Endothelial cell of umbilical vein (primary cell): ENCODE measurements at regions of chr5 and their contacts with region 1.

Region 1: DNA sequence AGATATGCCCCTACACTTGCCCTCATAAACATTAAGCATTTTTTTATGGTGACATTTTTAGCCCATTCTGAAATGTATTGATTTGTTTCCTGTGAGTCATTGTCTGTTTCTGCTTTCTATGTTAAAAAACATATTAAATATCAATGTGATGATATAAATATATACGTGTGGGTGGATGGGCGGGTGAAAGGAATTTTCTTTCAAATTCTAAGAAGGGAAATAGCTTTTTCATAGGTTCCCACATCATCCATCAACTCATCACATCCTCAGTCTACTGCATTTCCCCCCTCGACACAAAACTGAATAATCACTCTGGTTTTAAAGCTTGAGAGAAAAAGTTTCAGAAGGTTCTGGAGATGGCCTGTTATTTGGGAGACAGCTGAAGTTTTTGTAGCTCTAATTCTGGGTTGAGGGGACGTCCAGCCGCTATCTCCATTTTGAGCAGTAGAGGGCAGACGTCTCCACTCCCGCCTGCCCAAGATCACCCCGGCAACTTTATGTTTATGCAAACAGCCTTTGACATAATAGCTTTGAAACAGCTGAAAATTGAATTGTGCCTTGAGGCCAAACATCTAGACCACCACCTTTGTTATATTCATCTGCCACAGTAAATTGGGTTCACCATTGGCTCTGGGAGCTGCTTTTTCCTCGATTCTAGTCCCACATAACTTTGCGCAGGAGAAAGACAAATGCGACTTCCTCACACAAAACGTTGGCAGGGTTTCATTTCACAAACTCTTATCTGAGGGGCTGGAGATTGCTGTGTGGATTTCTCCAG is 216.2 kb upstream of the CLINT1 start:
- DNase-seq: peak; percentile 92
- H3K4me3 ChIP-seq: peak overlapping the region in 2 of 3 experiments; percentile 8 to 50
- H3K27ac ChIP-seq: peak overlapping the region; percentile 97
- H3K4me1 ChIP-seq: peaks cover 18% of the 10 kb centered on the region
- H3K27me3 ChIP-seq: no peaks in the 10 kb centered on the region
- CTCF ChIP-seq: peak; percentile 86 to 87
- POLR2A ChIP-seq: no peak

Region 2: GRCh38 chr5:157471709-157472108 is 603.5 kb before region 1 on chr5:
- CTCF ChIA-PET with region 1: no interaction called
- POLR2A ChIA-PET with region 1: no interaction called
- dilution Hi-C with region 1: no loop called
- intact Hi-C with region 1: no loop called
- DNase-seq: peak; percentile 27
- H3K4me3 ChIP-seq: no peak overlapping the region
- H3K27ac ChIP-seq: no peak overlapping the region
- H3K4me1 ChIP-seq: peaks cover 6% of the 10 kb centered on the region
- H3K27me3 ChIP-seq: no peaks in the 10 kb centered on the region
- CTCF ChIP-seq: peak; percentile 48 to 57
- POLR2A ChIP-seq: no peak

Region 3: GRCh38 chr5:158013939-158014338 is 61.2 kb before region 1 on chr5:
- CTCF ChIA-PET with region 1: interaction called, 8 read pairs
- POLR2A ChIA-PET with region 1: no interaction called
- dilution Hi-C with region 1: no loop called
- intact Hi-C with region 1: loop called (anchors 2 kb)
- DNase-seq: peak; percentile 29
- H3K4me3 ChIP-seq: no peak overlapping the region
- H3K27ac ChIP-seq: no peak overlapping the region
- H3K4me1 ChIP-seq: no peaks in the 10 kb centered on the region
- H3K27me3 ChIP-seq: no peaks in the 10 kb centered on the region
- CTCF ChIP-seq: peak; percentile 17 to 26
- POLR2A ChIP-seq: no peak

Region 4: GRCh38 chr5:158119961-158120723 is 45.0 kb after region 1 on chr5:
- CTCF ChIA-PET with region 1: interaction called, 23 read pairs
- POLR2A ChIA-PET with region 1: no interaction called
- dilution Hi-C with region 1: no loop called
- intact Hi-C with region 1: loop called (anchors 1 kb)
- DNase-seq: peak; percentile 83
- H3K4me3 ChIP-seq: no peak overlapping the region
- H3K27ac ChIP-seq: peak overlapping the region; percentile 49
- H3K4me1 ChIP-seq: no peaks in the 10 kb centered on the region
- H3K27me3 ChIP-seq: no peaks in the 10 kb centered on the region
- CTCF ChIP-seq: no peak
- POLR2A ChIP-seq: no peak

Region 5: GRCh38 chr5:158163451-158164295 is 88.5 kb after region 1 on chr5:
- CTCF ChIA-PET with region 1: interaction called, 46 read pairs
- POLR2A ChIA-PET with region 1: no interaction called
- dilution Hi-C with region 1: no loop called
- intact Hi-C with region 1: no loop called
- DNase-seq: no peak
- H3K4me3 ChIP-seq: no peak overlapping the region
- H3K27ac ChIP-seq: no peak overlapping the region
- H3K4me1 ChIP-seq: peaks cover 2% of the 10 kb centered on the region
- H3K27me3 ChIP-seq: no peaks in the 10 kb centered on the region
- CTCF ChIP-seq: no peak
- POLR2A ChIP-seq: no peak

Region 6: DNA sequence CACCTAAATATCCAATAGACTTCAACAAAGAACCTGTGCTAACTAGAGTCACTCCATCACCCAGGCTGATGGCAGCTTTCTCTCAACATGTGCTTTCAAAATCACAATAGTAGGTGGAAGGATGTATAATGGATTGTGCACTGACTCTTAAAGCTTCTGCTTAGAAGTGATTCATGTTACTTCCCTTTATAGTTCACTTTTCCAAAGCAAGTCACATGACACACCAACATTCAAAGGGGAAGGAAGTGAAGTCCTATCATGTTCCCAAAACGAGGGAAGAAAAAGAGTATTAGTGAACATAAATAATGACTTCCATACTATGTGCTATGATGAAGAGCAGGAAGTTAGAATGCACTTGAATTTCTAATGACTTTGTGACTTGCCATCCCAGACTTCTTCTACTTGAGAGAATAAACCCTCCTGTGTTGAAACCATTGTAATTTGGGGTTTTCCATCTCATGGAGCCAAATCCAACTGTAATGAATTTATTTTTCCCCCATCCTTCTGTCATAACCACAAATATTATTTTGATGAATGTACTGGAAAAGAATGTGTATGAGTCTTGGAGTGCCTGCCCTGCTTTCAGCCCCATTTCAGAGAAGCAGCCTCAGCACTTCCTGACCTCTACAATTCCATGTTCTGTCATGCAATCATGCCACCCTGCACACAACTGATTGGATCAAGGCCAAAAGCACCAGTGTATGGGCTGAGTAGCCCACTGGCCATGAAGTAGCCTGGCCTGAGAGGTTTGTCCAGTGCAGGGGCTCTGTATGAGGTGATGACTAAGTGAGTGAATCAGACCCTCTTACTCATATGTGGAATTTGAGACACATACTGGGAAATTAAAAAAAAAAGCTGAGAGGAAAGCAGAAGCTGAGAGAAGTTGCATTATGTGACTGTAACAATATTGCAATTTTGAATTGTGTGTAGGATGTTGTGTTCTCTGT is 309.6 kb after region 1 on chr5:
- CTCF ChIA-PET with region 1: interaction called, 4 read pairs
- POLR2A ChIA-PET with region 1: no interaction called
- dilution Hi-C with region 1: no loop called
- intact Hi-C with region 1: loop called (anchors 1 kb)
- DNase-seq: peak; percentile 79
- H3K4me3 ChIP-seq: no peak overlapping the region
- H3K27ac ChIP-seq: peak overlapping the region; percentile 70
- H3K4me1 ChIP-seq: peaks cover 27% of the 10 kb centered on the region
- H3K27me3 ChIP-seq: no peaks in the 10 kb centered on the region
- CTCF ChIP-seq: no peak
- POLR2A ChIP-seq: no peak

Region 7: GRCh38 chr5:159106569-159107282 is 1031.5 kb after region 1 on chr5:
- CTCF ChIA-PET with region 1: interaction called, 110 read pairs
- POLR2A ChIA-PET with region 1: no interaction called
- dilution Hi-C with region 1: no loop called
- intact Hi-C with region 1: loop called (anchors 1 kb)
- DNase-seq: peak; percentile 64
- H3K4me3 ChIP-seq: no peak overlapping the region
- H3K27ac ChIP-seq: no peak overlapping the region
- H3K4me1 ChIP-seq: no peaks in the 10 kb centered on the region
- H3K27me3 ChIP-seq: peaks cover 46 to 55% of the 10 kb centered on the region in 2 experiments
- CTCF ChIP-seq: peak; percentile 82 to 90
- POLR2A ChIP-seq: no peak